ENCODE measurements at regions of chr12 and their contacts with region 1.

Region 1: GRCh38 chr12:57462251-57462911 is 2.8 kb downstream of the GLI1 start:
- DNase-seq: peak; percentile 94
- CTCF ChIP-seq: peak; percentile 91

Region 2: GRCh38 chr12:57238854-57239554 is 223.4 kb before region 1 on chr12:
- CTCF ChIA-PET with region 1: interaction called, 37 read pairs
- POLR2A ChIA-PET with region 1: no interaction called
- DNase-seq: peak; percentile 95
- CTCF ChIP-seq: peak; percentile 100

Region 3: DNA sequence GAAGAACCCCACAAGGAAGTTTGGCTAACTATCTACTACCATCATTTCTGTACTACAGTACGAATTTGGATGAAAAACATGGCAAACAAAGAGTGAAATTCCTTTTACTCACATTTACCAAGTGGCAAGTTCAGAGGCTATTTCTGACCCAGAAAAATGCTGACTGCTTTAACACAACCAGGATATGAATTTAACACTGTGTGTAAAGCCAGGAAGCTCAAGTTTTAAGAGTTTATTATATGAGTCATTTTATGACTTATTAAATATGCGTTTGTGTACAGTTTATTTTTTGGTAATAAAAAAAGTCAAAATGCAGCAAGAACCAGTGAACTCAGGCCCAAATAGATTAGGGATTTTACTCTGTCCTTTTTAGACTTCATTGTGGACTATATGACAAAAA is 153.0 kb before region 1 on chr12:
- CTCF ChIA-PET with region 1: interaction called, 21 read pairs
- POLR2A ChIA-PET with region 1: no interaction called
- DNase-seq: no peak
- CTCF ChIP-seq: no peak

Region 4: DNA sequence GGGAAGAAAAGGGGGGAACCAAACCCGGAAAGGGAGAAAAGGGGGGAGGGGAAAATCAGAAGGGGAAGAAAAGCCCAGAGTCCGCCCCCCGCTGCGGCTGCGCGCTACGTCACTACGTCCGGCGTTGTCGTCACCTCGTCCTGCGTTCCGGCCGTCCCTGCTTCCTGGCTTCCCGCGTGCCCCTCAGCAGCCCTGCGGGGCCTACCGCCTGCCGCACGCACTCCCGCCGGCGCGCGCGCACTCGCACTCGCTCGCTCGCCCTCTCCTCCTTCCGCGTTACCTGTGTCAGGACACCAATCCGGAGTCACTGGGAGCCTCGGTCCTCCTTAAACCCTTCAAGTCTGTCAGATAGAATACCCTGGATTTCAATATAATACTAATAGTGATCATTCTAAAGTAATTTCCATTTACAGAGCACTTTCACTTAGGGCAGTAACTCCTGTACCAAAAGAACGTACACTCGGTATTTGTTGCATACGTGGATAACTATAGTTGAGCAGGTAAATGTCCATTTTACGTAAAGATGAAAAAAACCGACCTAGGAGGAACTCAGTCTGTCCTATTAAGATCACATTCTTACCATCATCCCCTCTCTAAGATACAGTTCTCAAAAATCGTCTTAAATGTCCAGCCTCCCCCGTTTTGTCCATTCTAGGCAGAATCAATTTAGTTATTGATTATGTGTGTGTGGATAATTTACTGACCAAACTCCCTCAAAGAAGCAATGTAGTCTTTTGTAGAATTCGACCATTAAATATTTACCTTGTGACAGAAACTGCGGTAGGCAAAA is 31.3 kb before region 1 on chr12 and contains the start of gene R3HDM2:
- CTCF ChIA-PET with region 1: interaction called, 19 read pairs
- POLR2A ChIA-PET with region 1: no interaction called
- DNase-seq: peak; percentile 97
- CTCF ChIP-seq: no peak

Region 5: GRCh38 chr12:57476162-57476992 is 14.0 kb after region 1 on chr12:
- CTCF ChIA-PET with region 1: interaction called, 171 read pairs
- POLR2A ChIA-PET with region 1: interaction called, 5 read pairs
- DNase-seq: peak; percentile 77
- CTCF ChIP-seq: peak; percentile 54

Region 6: DNA sequence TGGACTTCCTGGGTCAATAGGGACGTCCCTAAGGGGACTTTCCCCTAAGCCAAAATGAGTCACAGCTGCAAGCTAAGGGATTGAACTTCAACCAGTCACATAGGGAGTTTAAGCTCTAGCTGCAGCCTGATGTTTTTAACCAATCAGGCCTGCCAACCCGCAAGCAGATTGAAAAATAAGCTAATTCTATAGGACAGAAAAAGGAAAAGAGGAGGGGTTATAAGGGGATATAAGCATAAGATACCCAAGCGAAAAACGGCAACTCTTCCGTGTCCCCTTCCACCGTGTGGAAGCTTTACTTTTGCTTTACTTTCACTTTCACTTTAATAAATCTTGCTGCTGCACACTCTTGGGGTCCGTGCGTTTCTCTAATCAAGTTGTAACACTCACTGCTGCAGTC is 503.4 kb after region 1 on chr12:
- CTCF ChIA-PET with region 1: no interaction called
- POLR2A ChIA-PET with region 1: no interaction called
- DNase-seq: no peak
- CTCF ChIP-seq: no peak